ENCODE measurements at regions of chr5 and their contacts with region 1.

Region 1: DNA sequence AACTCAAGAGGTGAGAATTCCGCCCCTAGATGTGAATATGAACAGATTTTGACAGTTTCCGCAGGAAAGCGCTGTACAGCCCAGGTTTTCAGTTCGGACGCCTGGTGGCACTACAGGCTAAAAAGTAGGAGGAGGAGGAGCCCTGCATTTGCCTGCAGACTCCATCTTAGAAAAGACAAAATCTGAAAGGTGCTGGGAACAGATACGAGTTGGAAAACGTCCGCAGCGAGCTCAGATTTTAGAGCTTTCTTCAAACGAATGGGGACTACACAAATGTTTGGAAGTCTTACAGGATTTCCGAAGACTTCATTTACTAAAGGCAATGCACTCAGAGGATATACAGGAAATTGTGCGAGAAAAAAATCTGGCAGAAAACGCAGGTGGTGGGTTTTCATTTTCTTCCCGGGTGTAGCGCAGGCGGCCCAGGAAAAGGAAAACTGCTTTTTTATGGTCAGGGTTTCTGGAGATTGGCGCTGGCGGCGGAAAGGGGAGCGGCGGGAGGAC is 9.9 kb upstream of the PCDHB2 start:
- DNase-seq: peak; percentile 77
- H3K4me3 Mint-ChIP-seq: peak overlapping the region; percentile 85
- H3K27ac Mint-ChIP-seq: no peak overlapping the region
- H3K4me1 Mint-ChIP-seq: peaks cover 6% of the 10 kb centered on the region
- H3K27me3 Mint-ChIP-seq: peaks cover 23% of the 10 kb centered on the region

Region 2: DNA sequence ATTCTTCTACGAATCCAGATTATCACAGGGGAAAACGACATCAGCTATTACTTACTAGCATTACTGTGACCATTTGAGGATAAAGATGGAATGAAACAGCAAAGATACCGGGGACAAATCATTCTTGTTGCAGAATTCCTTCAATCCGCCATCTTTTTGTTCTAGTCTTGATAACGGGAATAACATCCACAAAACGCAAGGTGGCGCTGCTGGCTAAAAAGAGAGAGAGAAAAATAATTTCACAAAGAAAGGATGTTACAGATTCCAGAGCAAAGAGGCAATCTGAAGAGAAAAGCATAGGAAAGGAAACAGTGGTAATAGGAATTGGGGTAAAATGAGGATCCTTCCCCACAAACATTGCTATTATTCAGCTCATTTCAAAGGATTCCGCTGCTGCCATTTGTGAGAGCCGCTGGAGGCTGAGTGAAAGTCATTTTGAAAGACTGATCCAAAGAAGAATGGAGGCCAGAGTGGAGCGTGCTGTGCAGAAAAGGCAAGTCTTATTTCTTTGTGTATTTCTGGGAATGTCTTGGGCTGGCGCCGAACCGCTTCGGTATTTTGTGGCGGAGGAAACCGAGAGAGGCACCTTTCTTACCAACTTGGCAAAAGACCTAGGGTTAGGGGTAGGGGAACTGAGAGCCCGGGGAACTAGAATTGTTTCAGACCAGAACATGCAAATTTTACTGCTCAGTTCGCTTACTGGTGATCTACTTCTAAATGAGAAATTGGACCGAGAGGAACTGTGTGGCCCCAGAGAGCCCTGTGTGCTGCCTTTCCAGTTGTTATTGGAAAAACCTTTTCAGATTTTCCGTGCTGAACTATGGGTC is 88.1 kb after region 1 on chr5 and contains the start of gene PCDHB7:
- CTCF ChIA-PET with region 1: no interaction called
- intact Hi-C with region 1: loop called (anchors 5 kb)
- DNase-seq: peak; percentile 58
- H3K4me3 Mint-ChIP-seq: no peak within 1 kb of the TSS
- H3K27ac Mint-ChIP-seq: no peak within 1 kb of the TSS
- H3K4me1 Mint-ChIP-seq: no peaks in the 10 kb centered on the region
- H3K27me3 Mint-ChIP-seq: peaks cover 41% of the 10 kb centered on the region
- total RNA-seq, gene PCDHB7: not detected

Measured in activated naive CD4-positive, alpha-beta T cell treated with anti-CD3 and anti-CD28 coated beads for 36 hours (primary cell).